A673 (cell line): ENCODE measurements at regions of chr10 and their contacts with region 1.

Region 1: GRCh38 chr10:73886085-73886529 is 11.8 kb upstream of the CAMK2G start:
- DNase-seq: peak; percentile 85
- H3K4me3 ChIP-seq: no peak overlapping the region
- H3K27ac ChIP-seq: no peak overlapping the region
- H3K4me1 ChIP-seq: peaks cover 38% of the 10 kb centered on the region
- H3K27me3 ChIP-seq: no peaks in the 10 kb centered on the region
- CTCF ChIP-seq: peak; percentile 94

Region 2: DNA sequence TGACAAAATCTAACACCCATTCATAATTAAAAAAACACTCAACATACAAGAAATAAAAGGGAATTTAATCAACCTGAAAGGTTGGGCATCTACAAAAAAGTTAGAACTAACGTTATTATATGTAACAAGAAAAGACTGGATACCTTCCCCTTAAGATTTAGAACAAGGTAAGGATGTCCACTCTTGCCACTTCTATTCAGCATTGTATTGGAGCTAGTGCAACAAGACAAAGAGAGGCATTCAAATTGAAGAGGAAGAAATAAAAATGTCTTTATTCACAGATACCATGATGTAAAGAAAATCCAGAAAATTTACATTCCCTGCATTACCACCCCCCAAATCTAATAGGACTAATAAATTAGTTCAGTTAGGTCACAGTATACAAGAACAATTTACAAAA is 699.8 kb before region 1 on chr10:
- CTCF ChIA-PET with region 1: no interaction called
- POLR2A ChIA-PET with region 1: no interaction called
- intact Hi-C with region 1: no loop called
- DNase-seq: no peak
- H3K4me3 ChIP-seq: no peak overlapping the region
- H3K27ac ChIP-seq: no peak overlapping the region
- H3K4me1 ChIP-seq: no peaks in the 10 kb centered on the region
- H3K27me3 ChIP-seq: no peaks in the 10 kb centered on the region
- CTCF ChIP-seq: no peak

Region 3: DNA sequence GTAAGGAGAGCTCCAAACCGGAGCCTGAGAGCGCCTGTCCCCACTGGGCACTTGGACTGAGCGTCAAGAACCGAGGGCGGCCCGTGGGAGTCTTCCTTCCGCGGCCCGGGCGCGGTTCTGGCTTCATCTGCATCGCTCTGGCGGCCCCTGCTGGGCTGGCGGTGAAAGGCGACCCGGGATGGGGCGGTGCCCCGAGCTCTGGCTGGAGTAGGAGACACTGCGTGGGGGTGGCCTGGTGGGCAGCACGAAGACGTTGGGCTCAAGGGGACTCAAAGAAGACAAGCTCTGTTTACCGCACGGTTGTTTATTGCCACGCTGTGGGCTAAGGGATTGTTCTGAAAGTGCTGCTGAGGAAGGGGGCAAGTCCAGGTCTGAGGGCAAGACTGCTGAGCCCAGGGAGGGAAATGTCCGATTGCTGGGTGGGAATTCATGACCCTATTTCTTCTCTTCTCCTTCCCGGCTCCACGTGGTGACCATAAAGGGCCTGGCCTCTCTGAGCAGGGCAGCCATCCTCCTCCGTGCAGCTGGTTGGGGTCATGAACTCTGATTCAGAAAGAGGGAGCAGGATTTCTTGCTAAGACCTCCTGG is 54.6 kb after region 1 on chr10:
- CTCF ChIA-PET with region 1: interaction called, 16 read pairs
- POLR2A ChIA-PET with region 1: no interaction called
- intact Hi-C with region 1: loop called (anchors 1 kb)
- DNase-seq: peak; percentile 83
- H3K4me3 ChIP-seq: no peak overlapping the region
- H3K27ac ChIP-seq: peak overlapping the region; percentile 37
- H3K4me1 ChIP-seq: peaks cover 9% of the 10 kb centered on the region
- H3K27me3 ChIP-seq: no peaks in the 10 kb centered on the region
- CTCF ChIP-seq: peak; percentile 93

Region 4: GRCh38 chr10:74081192-74081803 is 195.2 kb after region 1 on chr10:
- CTCF ChIA-PET with region 1: interaction called, 29 read pairs
- POLR2A ChIA-PET with region 1: interaction called, 27 read pairs
- intact Hi-C with region 1: loop called (anchors 1 kb)
- DNase-seq: peak; percentile 84
- H3K4me3 ChIP-seq: no peak overlapping the region
- H3K27ac ChIP-seq: peak overlapping the region; percentile 90
- H3K4me1 ChIP-seq: peaks cover 56% of the 10 kb centered on the region
- H3K27me3 ChIP-seq: no peaks in the 10 kb centered on the region
- CTCF ChIP-seq: peak; percentile 87

Region 5: DNA sequence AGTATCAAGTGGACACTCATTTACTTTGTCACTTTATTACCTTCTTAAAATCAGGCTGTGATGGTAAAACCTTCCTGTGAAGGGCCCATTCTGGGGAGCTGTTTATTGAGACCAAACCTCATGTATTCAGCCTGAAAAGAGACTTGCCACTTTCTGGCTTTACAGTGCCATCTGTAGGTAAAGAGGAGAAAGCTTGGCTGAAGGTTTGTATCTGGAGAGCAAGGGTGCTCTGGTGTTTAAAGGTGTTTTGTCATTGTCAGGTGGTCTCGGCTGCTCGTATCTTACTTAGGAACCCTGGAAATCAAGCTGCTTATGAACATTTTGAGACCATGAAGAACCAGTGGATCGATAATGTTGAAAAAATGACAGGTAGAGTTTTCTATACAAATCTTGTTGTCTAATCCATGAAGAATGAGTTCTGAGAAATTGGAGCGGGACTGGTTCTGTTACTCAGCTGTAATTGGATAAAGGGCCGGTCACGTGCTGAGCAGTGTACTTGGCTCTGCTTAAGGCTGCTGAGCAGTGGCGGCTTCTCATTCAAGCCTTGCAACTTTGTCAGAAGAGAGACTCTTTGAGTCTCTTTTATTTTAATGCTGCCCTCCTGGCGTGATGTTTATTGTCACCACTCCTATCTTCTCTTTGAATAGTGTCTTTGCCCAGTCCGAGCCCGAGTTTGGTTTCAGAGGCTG is 217.6 kb after region 1 on chr10:
- CTCF ChIA-PET with region 1: interaction called, 28 read pairs
- POLR2A ChIA-PET with region 1: no interaction called
- intact Hi-C with region 1: loop called (anchors 1 kb)
- DNase-seq: peak; percentile 53
- H3K4me3 ChIP-seq: no peak overlapping the region
- H3K27ac ChIP-seq: no peak overlapping the region
- H3K4me1 ChIP-seq: no peaks in the 10 kb centered on the region
- H3K27me3 ChIP-seq: no peaks in the 10 kb centered on the region
- CTCF ChIP-seq: peak; percentile 56

Region 6: GRCh38 chr10:74234569-74234968 is 348.5 kb after region 1 on chr10:
- CTCF ChIA-PET with region 1: interaction called, 3 read pairs
- POLR2A ChIA-PET with region 1: no interaction called
- intact Hi-C with region 1: loop called (anchors 5 kb)
- DNase-seq: no peak
- H3K4me3 ChIP-seq: no peak overlapping the region
- H3K27ac ChIP-seq: no peak overlapping the region
- H3K4me1 ChIP-seq: peaks cover 29% of the 10 kb centered on the region
- H3K27me3 ChIP-seq: no peaks in the 10 kb centered on the region
- CTCF ChIP-seq: peak; percentile 65

Region 7: DNA sequence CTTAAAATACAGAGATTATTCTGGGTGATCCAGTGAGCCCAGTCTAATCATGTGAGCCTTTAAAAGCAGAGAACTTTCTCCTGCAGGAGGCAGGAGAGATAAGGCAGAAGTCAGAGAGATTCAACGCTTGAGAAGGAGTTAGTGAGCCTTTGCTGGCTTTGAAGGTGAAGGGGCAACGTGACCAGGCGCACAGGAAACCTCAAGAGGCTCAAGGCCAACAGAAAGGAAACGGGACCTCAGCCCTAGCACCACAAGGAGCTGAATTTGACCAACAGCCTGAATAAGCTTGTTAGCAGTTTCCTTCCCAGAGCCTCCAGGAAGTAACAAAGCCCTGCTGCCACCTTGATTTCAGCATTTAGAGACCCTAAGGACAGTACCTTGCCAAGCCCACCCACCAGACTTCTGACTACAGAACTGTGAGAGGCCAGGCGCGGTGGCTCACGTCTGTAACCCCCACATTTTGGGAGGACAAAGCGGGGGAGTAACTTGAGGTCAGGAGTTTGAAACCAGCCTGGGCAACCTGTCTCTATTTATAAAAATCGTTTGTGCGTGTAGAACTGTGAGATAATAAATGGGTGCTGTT is 853.0 kb after region 1 on chr10:
- CTCF ChIA-PET with region 1: no interaction called
- POLR2A ChIA-PET with region 1: no interaction called
- intact Hi-C with region 1: no loop called
- DNase-seq: no peak
- H3K4me3 ChIP-seq: no peak overlapping the region
- H3K27ac ChIP-seq: no peak overlapping the region
- H3K4me1 ChIP-seq: no peaks in the 10 kb centered on the region
- H3K27me3 ChIP-seq: no peaks in the 10 kb centered on the region
- CTCF ChIP-seq: peak; percentile 39; the same call in 1 of the 2 replicates